Heart right ventricle (tissue), 16 donors: ENCODE measurements at regions of chr4 and their contacts with region 1.

Region 1: DNA sequence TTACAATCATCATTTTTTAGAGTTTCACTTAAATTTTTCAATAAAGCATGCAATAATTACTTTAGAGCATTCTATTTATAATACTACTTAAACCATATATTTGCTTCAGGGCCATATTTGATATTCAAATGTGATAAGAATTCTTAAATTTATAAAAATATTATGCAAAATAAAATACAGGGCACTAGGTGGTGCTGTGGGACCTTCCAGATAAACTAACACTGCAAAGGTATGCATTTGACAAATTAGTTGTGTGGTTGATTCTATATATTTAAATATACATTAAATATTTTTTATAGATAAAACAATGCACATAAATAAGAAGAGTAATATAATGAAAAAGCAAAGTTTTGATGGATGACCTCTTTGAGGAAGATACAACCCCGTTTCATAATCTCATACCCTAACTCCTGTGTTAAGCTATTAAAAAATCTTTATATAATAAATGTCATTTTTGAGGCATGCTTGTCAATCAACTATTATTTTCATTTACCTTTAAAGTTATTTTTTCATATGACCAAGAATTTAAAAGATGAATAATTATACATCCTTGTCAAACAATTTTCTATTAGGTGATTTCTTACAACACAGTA is 128.4 kb downstream of the REELD1 start:
- DNase-seq: no peak
- ATAC-seq: no peak
- H3K4me3 ChIP-seq: no peak overlapping the region
- H3K27ac ChIP-seq: no peak overlapping the region
- H3K4me1 ChIP-seq: no peaks in the 10 kb centered on the region
- H3K27me3 ChIP-seq: no peaks in the 10 kb centered on the region
- CTCF ChIP-seq: peak; percentile 46 to 83 (median 67)

Region 2: DNA sequence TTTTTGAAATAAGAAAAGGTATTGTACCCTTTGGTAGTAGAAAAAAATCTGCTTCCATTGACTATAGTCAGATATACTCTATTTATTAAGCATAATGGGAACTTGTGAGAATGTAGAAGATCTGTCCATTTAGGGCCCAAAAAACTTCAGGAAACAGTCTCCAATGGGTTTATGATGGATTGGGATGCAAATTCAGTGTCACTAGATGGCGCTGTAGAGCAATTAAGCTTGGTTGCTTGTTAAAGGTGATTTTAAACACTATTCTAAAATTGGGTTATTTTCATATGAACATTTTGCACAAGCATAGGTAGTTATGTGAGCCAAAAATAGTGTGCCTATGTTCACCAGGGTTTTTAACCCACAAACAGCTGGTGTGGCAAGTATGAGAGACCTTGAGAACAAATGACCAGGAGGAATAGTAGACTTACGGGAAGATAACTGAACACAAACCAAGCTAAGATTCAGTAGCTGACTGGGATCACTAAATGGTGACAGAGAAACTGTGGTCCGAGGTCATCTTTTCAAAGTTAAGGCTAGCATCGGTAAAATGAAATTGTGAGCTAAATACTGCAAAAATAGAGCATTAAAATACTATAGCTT is 247.5 kb before region 1 on chr4:
- intact Hi-C with region 1: loop called in 4 of 10 experiments (anchors 2 to 10 kb)
- DNase-seq: peak in 1 of 2 donors; percentile 27
- ATAC-seq: no peak
- H3K4me3 ChIP-seq: no peak overlapping the region
- H3K27ac ChIP-seq: no peak overlapping the region
- H3K4me1 ChIP-seq: no peaks in the 10 kb centered on the region
- H3K27me3 ChIP-seq: no peaks in the 10 kb centered on the region
- CTCF ChIP-seq: peak; percentile 33 to 75 (median 70)

Region 3: DNA sequence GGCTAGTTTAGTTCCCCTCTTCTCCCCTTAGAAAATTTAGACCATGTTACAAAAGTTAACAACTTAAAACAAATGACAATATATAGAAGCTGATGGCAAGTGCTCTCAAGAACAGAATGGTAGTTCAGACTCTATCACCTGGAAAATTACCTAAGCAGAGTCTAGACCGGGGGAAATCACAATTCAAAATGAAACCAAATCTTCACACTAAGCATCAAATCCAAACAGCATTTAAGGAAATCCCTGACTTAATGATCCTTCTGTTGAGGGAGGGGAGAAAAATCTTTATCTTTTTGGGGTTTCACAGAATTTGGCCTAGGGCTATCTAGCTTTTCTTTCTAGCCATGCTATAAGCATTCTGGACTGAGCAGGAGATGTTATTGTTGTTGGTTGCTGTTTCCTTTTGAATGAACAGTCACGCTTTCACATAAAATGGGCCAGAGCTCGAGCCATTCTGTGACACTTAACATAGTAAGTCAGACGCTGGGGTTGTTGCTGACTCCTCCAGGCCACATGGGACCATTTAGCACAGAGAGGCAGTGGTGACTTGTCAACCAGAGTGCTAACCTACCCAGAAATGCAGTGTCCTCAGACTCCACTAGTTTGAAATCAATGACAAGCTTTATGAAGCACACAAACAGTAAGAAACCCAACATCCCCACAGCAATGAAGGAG is 183.2 kb before region 1 on chr4:
- intact Hi-C with region 1: no loop called
- DNase-seq: no peak
- ATAC-seq: no peak
- H3K4me3 ChIP-seq: no peak overlapping the region
- H3K27ac ChIP-seq: no peak overlapping the region
- H3K4me1 ChIP-seq: no peaks in the 10 kb centered on the region
- H3K27me3 ChIP-seq: no peaks in the 10 kb centered on the region
- CTCF ChIP-seq: no peak

Region 4: GRCh38 chr4:146243141-146243882 is 99.4 kb before region 1 on chr4:
- intact Hi-C with region 1: loop called in 2 of 10 experiments (anchors 2 to 5 kb)
- DNase-seq: peak; percentile 16 to 45
- ATAC-seq: peak in 4 of 8 donors; percentile 3 to 36 (median 7)
- H3K4me3 ChIP-seq: peak overlapping the region in 4 of 10 donors; percentile 7 to 43 (median 27)
- H3K27ac ChIP-seq: peak overlapping the region; percentile 61 to 94 (median 90)
- H3K4me1 ChIP-seq: peaks cover 8 to 74% (median 49%) of the 10 kb centered on the region in 9 donors
- H3K27me3 ChIP-seq: no peaks in the 10 kb centered on the region
- CTCF ChIP-seq: peak; percentile 33 to 64 (median 46)

Region 5: DNA sequence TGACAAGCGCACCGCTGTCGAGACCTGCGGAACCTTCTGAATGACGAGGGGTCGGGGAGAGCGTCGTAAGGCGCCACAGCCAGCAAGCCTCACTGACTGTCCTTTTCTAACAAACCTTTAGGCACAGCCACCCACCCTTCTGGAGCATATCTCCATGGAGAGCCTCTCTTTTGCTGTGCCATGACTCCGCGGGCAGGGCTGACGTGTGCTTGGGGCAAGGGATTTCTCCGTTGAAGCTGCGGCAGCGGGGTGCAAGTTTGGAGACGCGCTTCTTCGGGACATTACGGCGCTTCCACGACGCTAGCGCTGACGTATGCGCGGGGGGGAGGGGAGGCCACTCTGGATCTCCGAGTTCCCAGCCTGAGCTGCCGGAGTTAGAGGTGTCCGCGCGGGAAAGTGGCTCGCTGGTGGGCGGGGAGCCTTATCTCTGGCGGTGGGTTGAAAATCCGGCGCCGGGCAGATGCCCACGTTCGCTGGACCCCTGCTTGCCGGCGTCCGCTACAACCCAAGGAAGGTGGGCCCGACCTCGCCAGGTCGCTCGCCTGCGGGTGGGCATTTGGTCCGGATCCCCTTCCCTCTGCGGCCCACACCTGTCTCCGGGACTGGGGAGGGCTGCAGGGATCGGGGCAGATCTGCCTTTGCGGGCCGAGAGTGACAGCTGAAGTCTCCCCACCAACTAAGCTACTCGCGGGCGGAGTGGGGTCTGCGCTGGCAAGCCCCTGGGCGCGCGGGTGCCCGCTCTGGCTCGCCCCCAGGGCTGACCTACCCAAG is 179.6 kb after region 1 on chr4:
- intact Hi-C with region 1: loop called in 2 of 10 experiments (anchors 5 to 10 kb)
- DNase-seq: peak; percentile 89 to 94
- ATAC-seq: peak; percentile 98 to 99 (median 99)
- H3K4me3 ChIP-seq: peak overlapping the region; percentile 55 to 100 (median 76)
- H3K27ac ChIP-seq: peak overlapping the region; percentile 27 to 96 (median 84)
- H3K4me1 ChIP-seq: peaks cover 0 to 27% (median 21%) of the 10 kb centered on the region in 9 donors
- H3K27me3 ChIP-seq: no peaks in the 10 kb centered on the region
- CTCF ChIP-seq: no peak

Region 6: DNA sequence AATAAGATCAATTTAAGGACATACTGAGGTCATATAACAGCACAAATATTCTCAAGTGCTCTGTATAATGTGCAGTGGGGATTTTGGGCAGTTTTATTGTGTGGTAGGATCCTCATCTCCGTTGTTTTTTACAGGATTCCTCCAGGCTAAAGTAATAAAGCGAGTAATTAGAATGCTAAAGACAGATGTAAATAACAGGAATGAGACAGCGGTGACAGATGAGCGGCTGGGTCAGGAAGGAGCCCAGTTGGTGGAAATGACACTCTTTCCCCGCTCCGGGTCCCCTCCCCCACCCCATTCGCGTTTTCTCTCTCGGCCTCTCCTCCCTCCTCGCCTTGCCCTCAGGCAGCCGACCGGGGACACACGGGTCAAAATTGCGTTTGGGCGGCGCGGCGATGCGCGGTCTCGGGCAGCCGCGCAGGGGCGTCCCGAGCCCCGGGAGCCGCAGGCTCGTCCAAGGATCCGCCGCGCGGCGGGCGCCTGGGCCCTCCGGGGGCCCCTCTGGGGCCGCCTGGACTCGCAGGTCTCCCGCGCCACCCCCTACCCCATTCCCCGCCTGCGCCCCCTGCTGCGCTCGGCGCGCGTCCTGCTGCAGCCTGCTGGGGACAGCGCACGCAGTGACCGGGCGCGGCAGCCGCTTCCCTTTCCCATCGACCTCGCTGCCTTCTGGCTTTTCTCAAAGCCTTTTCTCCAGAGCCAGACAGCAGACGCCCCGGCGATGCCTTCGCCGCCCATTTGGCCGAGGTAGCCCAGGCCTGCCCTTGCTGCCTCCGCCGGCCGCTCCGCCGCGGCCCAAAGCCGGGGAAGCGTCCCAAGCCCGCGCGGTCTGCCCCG is 312.2 kb after region 1 on chr4:
- intact Hi-C with region 1: loop called in 2 of 10 experiments (anchors 10 kb)
- DNase-seq: no peak
- ATAC-seq: peak; percentile 33 to 70 (median 58)
- H3K4me3 ChIP-seq: peak overlapping the region in 9 of 10 donors; percentile 37 to 53 (median 47)
- H3K27ac ChIP-seq: no peak overlapping the region
- H3K4me1 ChIP-seq: peaks cover 0 to 15% (median 5%) of the 10 kb centered on the region in 9 donors
- H3K27me3 ChIP-seq: peaks cover 10 to 95% (median 70%) of the 10 kb centered on the region in 7 donors
- CTCF ChIP-seq: peak in 5 of 9 donors; percentile 10 to 43 (median 27)

Region 7: DNA sequence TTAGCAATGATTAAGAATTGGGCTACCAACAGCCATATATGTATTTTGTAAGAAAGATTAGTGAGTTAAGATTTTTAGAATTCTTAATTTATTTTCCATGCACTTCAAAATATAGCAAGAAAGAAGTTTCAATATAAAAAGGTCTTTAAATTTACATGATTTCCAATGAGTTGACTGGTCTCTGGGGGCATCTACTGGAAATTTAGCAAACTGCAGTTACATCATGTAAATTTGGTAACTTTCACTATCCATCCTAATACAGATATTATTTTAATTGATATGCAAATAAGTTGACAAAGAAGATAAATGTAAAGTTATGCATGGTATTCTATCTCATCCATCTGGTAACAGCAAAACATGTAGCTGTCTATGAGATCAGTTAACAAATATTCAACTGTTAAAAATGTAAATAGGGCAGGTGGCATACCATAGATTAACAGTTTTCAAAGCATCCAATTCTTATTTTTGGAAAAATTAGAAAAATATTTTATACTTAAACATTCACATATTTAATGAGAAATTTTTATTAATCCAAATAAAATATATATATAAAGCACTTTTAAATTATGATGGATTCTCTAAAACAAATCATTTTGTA is 573.9 kb after region 1 on chr4:
- intact Hi-C with region 1: loop called in 7 of 10 experiments (anchors 5 to 10 kb)
- DNase-seq: no peak
- ATAC-seq: no peak
- H3K4me3 ChIP-seq: no peak overlapping the region
- H3K27ac ChIP-seq: no peak overlapping the region
- H3K4me1 ChIP-seq: no peaks in the 10 kb centered on the region
- H3K27me3 ChIP-seq: peaks cover 0 to 45% (median 29%) of the 10 kb centered on the region in 7 donors
- CTCF ChIP-seq: peak; percentile 57 to 85 (median 75)

Region 8: DNA sequence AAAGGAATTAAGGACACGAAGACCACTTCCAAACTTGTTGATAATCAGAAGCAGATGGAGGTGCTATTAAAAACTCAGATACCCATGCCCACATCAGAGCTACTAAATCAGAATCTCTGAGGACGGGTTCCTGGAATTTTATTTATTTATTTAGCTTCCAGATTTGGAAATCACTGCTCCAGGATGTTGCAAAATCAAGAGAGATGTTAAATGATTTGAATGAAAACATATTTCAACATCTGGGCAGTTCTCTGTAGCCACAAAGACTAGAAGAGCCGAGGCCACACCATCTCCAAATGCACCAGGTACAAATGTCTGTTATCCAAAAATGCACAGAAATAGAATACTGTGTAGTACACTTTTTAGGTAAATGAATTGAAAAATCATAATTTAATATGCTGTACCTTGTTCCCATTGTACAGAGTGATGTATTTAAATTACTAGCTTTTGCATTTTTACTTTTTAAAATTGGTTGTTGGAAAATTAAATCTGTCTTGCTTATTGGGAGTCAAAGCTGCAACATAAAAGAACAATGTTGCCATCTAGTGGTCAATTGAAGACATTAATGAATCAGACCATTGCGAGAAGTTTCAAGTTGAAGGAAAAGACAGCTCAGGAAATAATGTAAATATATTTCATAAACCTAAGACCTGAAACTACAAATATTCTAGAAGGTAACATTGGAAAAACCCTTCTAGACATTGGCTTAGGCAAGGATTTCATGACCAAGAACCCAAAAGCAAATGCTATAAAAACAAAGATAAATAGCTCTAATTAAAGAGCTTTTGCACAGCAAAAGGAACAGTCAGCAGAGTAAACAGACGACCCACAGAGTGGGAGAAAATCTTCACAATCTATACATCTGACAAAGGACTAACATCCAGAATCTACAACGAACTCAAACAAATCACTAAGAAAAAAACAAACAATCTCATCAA is 754.2 kb after region 1 on chr4:
- intact Hi-C with region 1: loop called in 6 of 10 experiments (anchors 5 kb)
- DNase-seq: no peak
- ATAC-seq: peak in 3 of 8 donors; percentile 22 to 65 (median 47)
- H3K4me3 ChIP-seq: no peak overlapping the region
- H3K27ac ChIP-seq: no peak overlapping the region
- H3K4me1 ChIP-seq: peaks cover 0 to 5% (median 0%) of the 10 kb centered on the region in 9 donors
- H3K27me3 ChIP-seq: no peaks in the 10 kb centered on the region
- CTCF ChIP-seq: peak; percentile 61 to 85 (median 71)